Gastrocnemius medialis (tissue), 4 donors: ENCODE measurements at regions of chr14 and their contacts with region 1.

Region 1: GRCh38 chr14:49950275-49951228 is 57.7 kb downstream of the ARF6 start:
- DNase-seq: no peak
- ATAC-seq: no peak
- H3K4me3 ChIP-seq: no peak overlapping the region
- H3K27ac ChIP-seq: no peak overlapping the region
- H3K4me1 ChIP-seq: peaks cover 0 to 20% of the 10 kb centered on the region in 2 donors
- H3K27me3 ChIP-seq: no peaks in the 10 kb centered on the region
- CTCF ChIP-seq: no peak
- POLR2A ChIP-seq: no peak

Region 2: DNA sequence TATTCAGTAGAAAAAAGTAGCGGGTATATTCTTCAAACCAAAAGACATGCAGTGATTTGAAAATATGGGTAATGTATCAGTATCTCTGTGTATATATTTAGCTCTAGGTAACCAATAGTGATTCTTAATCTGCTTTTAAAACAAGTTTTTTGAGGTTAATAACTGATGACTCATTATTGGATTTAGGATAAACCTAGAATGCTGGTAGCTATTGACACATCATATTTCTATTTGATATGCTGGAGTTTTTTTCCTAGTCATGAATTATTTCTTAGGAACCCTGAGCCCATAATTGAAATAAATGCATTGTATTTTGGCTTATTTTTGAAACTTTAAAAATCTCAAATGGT is 42.1 kb before region 1 on chr14:
- in situ Hi-C with region 1: no loop called
- intact Hi-C with region 1: loop called (anchors 5 kb)
- DNase-seq: no peak
- ATAC-seq: no peak
- H3K4me3 ChIP-seq: no peak overlapping the region
- H3K27ac ChIP-seq: peak overlapping the region in 2 of 4 donors; percentile 4 to 32
- H3K4me1 ChIP-seq: peaks cover 0 to 6% of the 10 kb centered on the region in 2 donors
- H3K27me3 ChIP-seq: no peaks in the 10 kb centered on the region
- CTCF ChIP-seq: no peak
- POLR2A ChIP-seq: no peak